Gastrocnemius medialis (tissue), 4 donors: ENCODE measurements at regions of chr9 and their contacts with region 1.

Region 1: DNA sequence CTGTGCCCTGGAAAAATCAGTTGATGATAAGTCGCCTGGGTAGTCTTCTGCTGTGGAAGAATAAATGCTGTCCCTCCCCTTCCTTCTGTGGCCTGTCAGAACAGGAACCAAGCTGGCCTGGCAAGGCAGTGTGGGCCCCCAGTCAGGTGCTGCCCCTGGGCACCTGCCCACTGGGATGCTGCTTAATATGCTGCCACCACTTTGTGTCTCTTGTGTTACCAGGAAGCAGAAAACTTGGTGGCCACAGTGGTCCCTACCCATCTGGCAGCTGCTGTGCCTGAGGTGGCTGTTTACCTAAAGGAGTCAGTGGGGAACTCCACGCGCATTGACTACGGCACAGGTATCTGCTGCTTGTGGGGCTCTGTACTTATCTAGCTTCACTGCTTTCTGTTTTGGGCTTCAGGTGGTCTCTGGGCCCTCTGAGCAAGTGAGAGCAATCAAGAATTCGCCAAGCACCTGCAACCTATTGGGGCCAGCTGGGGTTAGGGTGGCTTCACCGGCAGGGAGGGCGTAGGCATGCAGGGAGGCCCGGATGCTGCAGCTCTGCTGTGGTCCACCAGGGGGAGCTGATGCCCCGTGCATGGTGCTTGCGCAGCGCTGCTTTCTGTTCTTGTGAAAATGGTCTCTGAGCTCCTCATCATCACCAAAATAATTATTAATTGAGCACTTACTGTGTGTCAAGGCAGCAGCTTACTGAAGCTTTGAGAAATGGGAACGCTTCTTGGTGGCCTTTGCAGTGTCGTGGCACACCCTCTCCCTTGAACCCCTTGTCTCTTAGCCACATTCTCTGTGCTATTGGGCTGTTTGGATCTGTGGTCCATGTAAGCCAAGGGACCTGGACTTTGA is 20.3 kb downstream of the PTPA start:
- DNase-seq: peak; percentile 45 to 65
- ATAC-seq: peak; percentile 68 to 83
- H3K4me3 ChIP-seq: no peak overlapping the region
- H3K27ac ChIP-seq: no peak overlapping the region
- H3K4me1 ChIP-seq: peaks cover 0 to 8% of the 10 kb centered on the region in 2 donors
- H3K27me3 ChIP-seq: no peaks in the 10 kb centered on the region
- CTCF ChIP-seq: peak; percentile 95 to 98 (median 96)
- POLR2A ChIP-seq: no peak

Region 2: DNA sequence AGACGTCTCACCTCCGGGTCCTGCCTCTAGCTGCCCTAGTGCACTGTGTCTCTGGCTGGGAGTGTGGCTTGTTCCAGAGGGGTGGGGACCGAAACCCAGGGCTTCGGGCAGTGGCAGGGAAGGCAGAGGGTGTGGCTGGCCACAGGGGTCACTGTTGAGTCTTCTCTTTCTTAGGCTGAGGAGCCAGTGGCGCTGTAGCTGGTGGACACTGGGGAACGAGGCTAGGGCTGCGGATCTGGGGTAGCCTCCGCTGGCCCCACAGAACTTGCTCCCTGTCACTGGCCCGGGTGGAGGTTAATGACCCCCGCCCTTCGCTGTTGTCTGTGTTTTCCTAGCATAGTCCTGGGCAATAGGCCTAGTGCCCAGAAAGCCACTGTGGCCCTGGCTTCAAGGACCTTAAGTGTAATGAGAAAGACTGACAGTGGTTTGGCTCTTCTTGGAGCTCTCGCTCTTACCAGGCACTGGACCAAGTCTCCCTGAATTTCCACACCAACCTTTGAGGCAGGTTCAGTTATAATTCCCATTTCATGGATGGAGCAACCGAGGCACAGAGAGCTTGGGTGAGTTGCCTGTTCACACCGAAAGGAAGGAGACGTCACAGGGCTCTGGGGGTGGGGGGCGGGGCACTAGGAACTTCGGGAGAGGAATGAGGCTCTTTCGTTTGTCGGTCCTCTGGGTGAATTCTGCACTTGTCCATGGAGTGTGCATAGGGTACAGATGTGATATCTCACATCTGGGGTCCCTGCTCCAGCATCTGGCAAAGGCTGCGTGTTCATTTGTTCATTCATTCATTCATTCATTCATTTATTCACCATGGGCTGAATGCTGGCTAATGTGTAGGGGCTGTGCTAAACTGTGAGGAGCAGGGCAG is 51.3 kb after region 1 on chr9:
- in situ Hi-C with region 1: no loop called
- intact Hi-C with region 1: no loop called
- DNase-seq: no peak
- ATAC-seq: no peak
- H3K4me3 ChIP-seq: no peak overlapping the region
- H3K27ac ChIP-seq: no peak overlapping the region
- H3K4me1 ChIP-seq: peaks cover 3 to 4% of the 10 kb centered on the region in 2 donors
- H3K27me3 ChIP-seq: no peaks in the 10 kb centered on the region
- CTCF ChIP-seq: no peak
- POLR2A ChIP-seq: no peak

Region 3: GRCh38 chr9:129617167-129617566 is 485.6 kb after region 1 on chr9:
- in situ Hi-C with region 1: loop called (anchors 5 to 10 kb)
- intact Hi-C with region 1: no loop called
- DNase-seq: no peak
- ATAC-seq: no peak
- H3K4me3 ChIP-seq: no peak overlapping the region
- H3K27ac ChIP-seq: no peak overlapping the region
- H3K4me1 ChIP-seq: peaks cover 0 to 5% of the 10 kb centered on the region in 2 donors
- H3K27me3 ChIP-seq: peaks cover 14 to 27% (median 16%) of the 10 kb centered on the region in 3 donors
- CTCF ChIP-seq: no peak
- POLR2A ChIP-seq: no peak